GM12878 (cell line): ENCODE measurements at regions of chr6 and their contacts with region 1.

Region 1: GRCh38 chr6:134822920-134823709 is 126.8 kb downstream of the ALDH8A1 start:
- DNase-seq: peak; percentile 36
- ATAC-seq: peak; percentile 95
- H3K4me3 ChIP-seq: no peak overlapping the region
- H3K27ac ChIP-seq: no peak overlapping the region
- H3K4me1 ChIP-seq: no peaks in the 10 kb centered on the region; the same call in 1 of the 2 replicates
- H3K27me3 ChIP-seq: no peaks in the 10 kb centered on the region
- CTCF ChIP-seq: peak; percentile 78 to 89 (median 80)
- EP300 ChIP-seq: no peak
- POLR2A ChIP-seq: no peak
- RAD21 ChIP-seq: peak; percentile 84

Region 2: DNA sequence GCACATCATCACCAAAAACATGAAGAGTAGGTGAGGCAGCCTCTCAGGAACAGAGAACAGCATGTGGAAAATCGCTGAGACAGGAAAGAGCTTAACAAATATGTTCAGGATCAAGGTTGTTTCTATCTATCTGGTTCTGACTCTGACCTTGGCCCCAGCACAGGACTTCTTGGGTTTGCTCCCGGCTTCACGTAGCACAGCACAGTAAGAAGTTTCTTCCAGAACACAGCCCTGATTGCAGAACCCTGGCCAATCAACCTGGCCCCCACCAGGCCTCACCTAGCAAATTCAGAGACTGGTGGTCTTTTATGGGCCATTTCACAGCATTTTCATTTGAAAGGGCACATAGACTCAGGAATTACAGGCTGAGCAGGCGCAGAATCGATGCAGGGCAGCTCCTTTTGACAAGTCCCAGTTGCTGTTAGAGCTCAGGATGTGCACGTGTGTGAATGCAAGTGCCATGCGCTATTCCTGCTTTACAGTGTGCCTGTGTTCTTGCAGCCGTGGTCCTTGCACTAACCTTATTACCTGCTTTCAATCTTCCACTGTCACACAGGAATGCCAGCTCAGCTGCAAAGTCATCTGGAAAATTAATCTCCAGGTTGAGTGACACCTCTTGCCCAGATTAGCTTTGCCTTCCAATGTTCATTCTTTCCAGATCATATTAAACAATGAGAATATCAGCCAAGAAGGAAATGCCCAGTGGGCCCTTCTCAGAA is 670.2 kb before region 1 on chr6:
- CTCF ChIA-PET with region 1: interaction called, 10 read pairs
- POLR2A ChIA-PET with region 1: no interaction called
- RAD21 ChIA-PET with region 1: interaction called, 7 read pairs
- SMC1A ChIA-PET with region 1: interaction called, 12 read pairs
- in situ Hi-C with region 1: no loop called
- intact Hi-C with region 1: loop called (anchors 5 kb)
- DNase-seq: no peak
- ATAC-seq: no peak
- H3K4me3 ChIP-seq: no peak overlapping the region
- H3K27ac ChIP-seq: no peak overlapping the region
- H3K4me1 ChIP-seq: no peaks in the 10 kb centered on the region
- H3K27me3 ChIP-seq: peaks cover 1 to 3% of the 10 kb centered on the region in 2 experiments; a peak in 2 of 4 replicates
- CTCF ChIP-seq: no peak
- EP300 ChIP-seq: no peak
- POLR2A ChIP-seq: no peak
- RAD21 ChIP-seq: no peak